HEK293 (cell line): ENCODE measurements at regions of chr12 and their contacts with region 1.

Region 1: GRCh38 chr12:51025836-51026638 is at the start of gene SLC11A2:
- H3K4me3 ChIP-seq: peak within 1 kb of the TSS; percentile 78
- H3K27ac ChIP-seq: peak within 1 kb of the TSS; percentile 95
- H3K4me1 ChIP-seq: 0 out of 2 replicates have a peak, but pooled peaks cover 4% of the 10 kb centered on the region
- CTCF ChIP-seq: 0 out of 2 replicates have a peak, but pooled peaks have one; percentile 42

Region 2: DNA sequence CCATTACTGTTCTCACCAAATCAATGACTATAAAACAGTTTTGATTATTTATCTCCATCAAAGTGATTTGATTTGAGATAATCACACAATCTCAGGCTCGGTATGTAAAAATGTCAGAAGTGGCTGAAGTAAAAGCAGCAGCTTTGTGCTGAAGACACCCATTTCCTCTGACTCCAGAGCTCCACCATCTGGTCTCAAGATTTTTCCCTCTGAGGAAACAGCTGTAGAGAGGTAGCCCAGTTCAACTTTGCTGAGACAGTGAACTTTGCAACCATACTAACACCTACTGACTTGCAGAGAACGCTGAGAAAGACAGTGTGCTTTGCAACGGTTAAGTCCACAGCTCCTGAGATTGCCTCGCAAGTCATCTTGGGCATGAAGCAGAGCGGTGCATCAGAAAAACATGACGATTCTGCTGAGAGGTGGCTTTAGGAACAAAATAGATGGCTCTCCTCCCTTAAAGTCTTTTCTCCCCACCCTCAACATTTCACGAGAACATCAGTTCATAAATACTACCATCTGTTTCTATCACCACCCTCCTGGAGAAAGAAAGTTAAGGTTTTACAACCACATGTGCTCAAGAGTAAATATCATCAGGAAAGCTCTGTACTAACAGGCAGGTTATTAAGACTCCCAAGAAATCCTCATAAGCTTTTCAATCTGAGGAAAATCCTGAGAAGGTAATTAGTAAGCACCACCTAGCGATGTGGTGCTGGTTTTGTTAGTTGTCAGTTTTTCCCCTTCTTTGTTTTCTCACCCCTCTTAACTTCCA is 38.9 kb before region 1 on chr12:
- CTCF ChIA-PET with region 1: interaction called, 33 read pairs
- POLR2A ChIA-PET with region 1: no interaction called
- H3K4me3 ChIP-seq: no peak overlapping the region
- H3K27ac ChIP-seq: no peak overlapping the region; the same call in 1 of the 2 replicates
- H3K4me1 ChIP-seq: no peaks in the 10 kb centered on the region
- CTCF ChIP-seq: peak; percentile 58

Region 3: GRCh38 chr12:51004504-51004903 is 21.5 kb before region 1 on chr12:
- CTCF ChIA-PET with region 1: interaction called, 10 read pairs
- POLR2A ChIA-PET with region 1: interaction called, 3 read pairs
- H3K4me3 ChIP-seq: no peak overlapping the region
- H3K27ac ChIP-seq: no peak overlapping the region
- H3K4me1 ChIP-seq: peaks cover 4% of the 10 kb centered on the region; the same call in 1 of the 2 replicates
- CTCF ChIP-seq: no peak